A549 (cell line): ENCODE measurements at regions of chr1 and their contacts with region 1.

Region 1: DNA sequence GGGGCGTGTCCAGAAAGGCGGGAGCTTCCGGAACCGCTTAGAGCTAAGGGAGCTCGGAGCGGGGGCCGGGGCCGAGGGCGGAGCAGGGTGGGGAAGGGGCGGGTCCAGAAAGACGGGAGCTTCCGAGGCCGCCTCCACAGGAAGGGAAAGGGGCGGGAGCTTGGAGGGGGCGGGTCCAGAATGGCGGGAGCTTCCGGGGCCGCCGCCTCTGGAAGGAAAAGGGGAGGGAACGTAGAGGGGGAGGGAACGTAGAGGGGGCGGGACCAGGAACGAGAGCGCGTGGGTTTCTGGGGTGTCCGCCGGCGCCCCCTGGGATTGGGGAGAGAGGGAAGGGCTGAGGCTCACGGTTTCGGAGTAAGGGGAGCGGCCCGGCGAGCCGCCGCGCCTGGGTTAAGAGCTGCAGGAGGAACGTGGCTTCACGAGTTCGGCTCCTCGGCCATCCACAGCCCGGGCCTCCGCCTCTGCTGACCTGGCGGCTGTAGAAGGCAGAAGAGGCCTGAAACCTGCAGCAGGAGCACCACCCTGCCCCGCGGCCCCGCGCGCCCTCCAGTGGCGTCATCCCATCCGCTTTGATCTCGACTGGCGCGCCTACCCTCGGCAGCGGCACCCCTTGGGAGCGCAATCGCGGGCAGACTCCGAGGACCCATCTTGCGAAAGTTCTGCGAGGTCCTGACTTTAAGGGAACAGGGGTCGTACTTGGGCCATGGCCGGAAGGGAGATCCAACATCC is 22.9 kb upstream of the HPDL start:
- DNase-seq: peak; percentile 87 to 95
- ATAC-seq: peak; percentile 94 to 95
- H3K4me3 ChIP-seq: peak overlapping the region; percentile 64
- H3K27ac ChIP-seq: peak overlapping the region; percentile 94 to 99
- H3K4me1 ChIP-seq: peaks cover 7% of the 10 kb centered on the region
- CTCF ChIP-seq: peak; percentile 76
- EP300 ChIP-seq: no peak
- POLR2A ChIP-seq: peak; percentile 56
- RAD21 ChIP-seq: peak; percentile 66 to 77

Region 2: GRCh38 chr1:44792783-44793714 is 510.7 kb before region 1 on chr1:
- CTCF ChIA-PET with region 1: interaction called, 10 read pairs
- POLR2A ChIA-PET with region 1: no interaction called
- DNase-seq: no peak
- ATAC-seq: peak in 1 of 2 experiments; percentile 6; a peak in 3 of 6 replicates
- H3K4me3 ChIP-seq: no peak overlapping the region
- H3K27ac ChIP-seq: 0 out of 6 replicates have a peak overlapping the region, but pooled peaks of 1 of the 2 experiments have one; percentile 32
- H3K4me1 ChIP-seq: no peaks in the 10 kb centered on the region
- CTCF ChIP-seq: no peak
- EP300 ChIP-seq: no peak
- POLR2A ChIP-seq: no peak
- RAD21 ChIP-seq: no peak

Region 3: DNA sequence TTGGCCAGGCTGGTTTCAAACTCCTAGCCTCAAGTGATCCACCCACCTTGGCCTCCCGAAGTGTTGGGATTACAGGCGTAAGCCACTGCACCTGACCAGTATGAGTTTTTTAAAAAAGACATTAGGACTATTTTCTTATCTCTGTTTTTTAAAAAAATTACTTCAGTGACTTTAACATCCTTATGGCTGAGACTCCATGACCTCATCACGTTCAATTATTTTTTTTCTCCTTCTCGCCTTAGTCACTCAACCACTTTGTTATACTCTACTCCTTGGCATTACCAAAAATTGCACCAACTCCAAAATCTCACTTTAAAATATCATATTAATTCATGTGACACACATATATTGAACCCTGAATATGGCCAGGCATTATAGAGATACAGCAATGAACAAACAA is 352.9 kb before region 1 on chr1:
- CTCF ChIA-PET with region 1: no interaction called
- POLR2A ChIA-PET with region 1: no interaction called
- DNase-seq: no peak
- ATAC-seq: no peak
- H3K4me3 ChIP-seq: no peak overlapping the region
- H3K27ac ChIP-seq: no peak overlapping the region
- H3K4me1 ChIP-seq: no peaks in the 10 kb centered on the region
- CTCF ChIP-seq: no peak
- EP300 ChIP-seq: no peak
- POLR2A ChIP-seq: no peak
- RAD21 ChIP-seq: no peak

Region 4: GRCh38 chr1:45040297-45040696 is 263.4 kb before region 1 on chr1:
- CTCF ChIA-PET with region 1: interaction called, 10 read pairs
- POLR2A ChIA-PET with region 1: no interaction called
- DNase-seq: no peak
- ATAC-seq: no peak
- H3K4me3 ChIP-seq: no peak overlapping the region
- H3K27ac ChIP-seq: no peak overlapping the region
- H3K4me1 ChIP-seq: peaks cover 11% of the 10 kb centered on the region; the same call in 2 of the 3 replicates
- CTCF ChIP-seq: no peak
- EP300 ChIP-seq: no peak
- POLR2A ChIP-seq: no peak
- RAD21 ChIP-seq: no peak